PC-9 (cell line): ENCODE measurements at regions of chr13 and their contacts with region 1.

Region 1: DNA sequence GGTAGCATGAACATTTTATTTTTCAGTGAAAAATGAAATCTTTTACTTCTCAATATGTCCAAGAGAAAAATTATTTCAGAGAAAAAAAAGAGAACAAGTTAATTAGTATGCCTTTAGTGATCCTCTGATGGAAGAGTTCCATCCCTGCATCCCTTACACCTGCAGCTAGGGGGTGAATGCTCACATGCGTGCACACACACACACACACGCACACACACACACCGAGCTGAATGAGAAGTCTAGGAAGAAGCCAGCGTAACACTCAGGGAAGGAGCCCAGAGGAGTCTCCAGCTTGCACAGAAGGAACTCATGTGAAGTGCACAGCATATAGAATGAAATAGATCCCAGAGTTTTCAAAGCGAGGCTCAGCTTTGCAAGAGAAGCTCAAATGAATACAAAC is 510.5 kb downstream of the IRS2 start:
- DNase-seq: no peak
- H3K4me3 ChIP-seq: no peak overlapping the region
- H3K27ac ChIP-seq: no peak overlapping the region
- H3K4me1 ChIP-seq: peaks cover 47% of the 10 kb centered on the region
- H3K27me3 ChIP-seq: no peaks in the 10 kb centered on the region
- CTCF ChIP-seq: peak; percentile 46; the same call in 1 of the 2 replicates

Region 2: DNA sequence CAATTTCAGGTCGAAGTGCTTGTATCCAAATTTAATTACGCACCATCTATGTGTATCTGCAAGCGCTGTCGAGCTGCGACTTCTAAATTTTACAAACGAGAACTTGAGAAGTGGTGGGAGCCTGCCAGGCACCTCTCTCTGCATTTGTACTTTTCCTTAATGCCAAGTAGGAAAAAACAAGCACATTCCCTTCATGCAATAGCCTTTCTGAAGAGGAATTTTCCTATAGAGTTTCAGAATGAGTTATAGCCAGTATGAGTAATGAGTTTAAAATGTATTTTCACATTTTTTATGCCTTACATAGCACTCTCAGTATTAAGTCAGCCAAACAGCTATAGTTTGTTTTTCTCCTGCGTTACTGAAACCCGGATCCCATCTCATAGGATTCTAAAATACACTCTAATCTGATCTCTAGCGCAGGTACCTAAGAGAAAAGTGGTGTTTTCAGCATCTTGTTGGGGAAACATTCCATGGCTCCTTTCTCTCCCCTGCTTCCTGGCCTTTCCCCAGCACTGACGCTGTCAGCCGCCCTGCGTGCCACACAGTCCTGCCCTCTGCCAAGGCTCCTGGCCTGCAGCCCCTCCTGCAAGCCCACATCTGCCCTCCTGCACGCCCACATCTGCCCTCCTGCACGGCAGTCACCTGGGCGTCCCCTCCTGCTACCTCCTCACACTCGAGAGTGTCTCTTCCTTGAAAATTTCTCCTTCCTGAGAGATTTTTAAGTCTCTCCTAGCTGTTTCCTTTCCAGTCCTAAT is 119.5 kb before region 1 on chr13:
- CTCF ChIA-PET with region 1: no interaction called
- POLR2A ChIA-PET with region 1: interaction called, 10 read pairs
- intact Hi-C with region 1: no loop called
- DNase-seq: peak; percentile 48 to 98
- H3K4me3 ChIP-seq: peak overlapping the region; percentile 48
- H3K27ac ChIP-seq: peak overlapping the region; percentile 96
- H3K4me1 ChIP-seq: peaks cover 69% of the 10 kb centered on the region
- H3K27me3 ChIP-seq: no peaks in the 10 kb centered on the region
- CTCF ChIP-seq: no peak

Region 3: GRCh38 chr13:109529964-109530363 is 254.1 kb after region 1 on chr13:
- CTCF ChIA-PET with region 1: no interaction called
- POLR2A ChIA-PET with region 1: no interaction called
- intact Hi-C with region 1: loop called (anchors 10 kb)
- DNase-seq: no peak
- H3K4me3 ChIP-seq: no peak overlapping the region
- H3K27ac ChIP-seq: no peak overlapping the region
- H3K4me1 ChIP-seq: no peaks in the 10 kb centered on the region
- H3K27me3 ChIP-seq: no peaks in the 10 kb centered on the region
- CTCF ChIP-seq: no peak

Region 4: DNA sequence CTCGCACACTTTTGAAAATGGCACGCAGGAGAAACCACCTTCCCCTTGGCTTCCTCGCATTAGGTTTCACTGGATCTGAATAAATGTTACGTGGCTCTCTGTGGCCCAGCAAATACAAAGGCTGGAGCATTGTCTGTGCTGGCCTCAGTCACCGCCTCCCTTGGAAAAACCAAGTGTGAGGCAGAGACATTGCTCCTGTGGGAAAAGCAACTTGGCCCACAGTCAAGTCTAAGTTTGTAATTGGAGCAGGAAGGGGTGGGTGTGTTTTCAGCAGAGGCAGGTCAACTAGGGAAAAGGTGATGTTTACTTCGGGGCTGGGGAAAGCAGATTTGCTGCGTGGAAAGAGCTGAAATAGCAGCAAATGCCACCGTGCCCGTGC is 409.0 kb after region 1 on chr13:
- CTCF ChIA-PET with region 1: no interaction called
- POLR2A ChIA-PET with region 1: no interaction called
- intact Hi-C with region 1: loop called (anchors 5 kb)
- DNase-seq: peak; percentile 75 to 96
- H3K4me3 ChIP-seq: peak overlapping the region; percentile 52
- H3K27ac ChIP-seq: peak overlapping the region; percentile 95
- H3K4me1 ChIP-seq: peaks cover 50% of the 10 kb centered on the region
- H3K27me3 ChIP-seq: no peaks in the 10 kb centered on the region
- CTCF ChIP-seq: no peak

Region 5: DNA sequence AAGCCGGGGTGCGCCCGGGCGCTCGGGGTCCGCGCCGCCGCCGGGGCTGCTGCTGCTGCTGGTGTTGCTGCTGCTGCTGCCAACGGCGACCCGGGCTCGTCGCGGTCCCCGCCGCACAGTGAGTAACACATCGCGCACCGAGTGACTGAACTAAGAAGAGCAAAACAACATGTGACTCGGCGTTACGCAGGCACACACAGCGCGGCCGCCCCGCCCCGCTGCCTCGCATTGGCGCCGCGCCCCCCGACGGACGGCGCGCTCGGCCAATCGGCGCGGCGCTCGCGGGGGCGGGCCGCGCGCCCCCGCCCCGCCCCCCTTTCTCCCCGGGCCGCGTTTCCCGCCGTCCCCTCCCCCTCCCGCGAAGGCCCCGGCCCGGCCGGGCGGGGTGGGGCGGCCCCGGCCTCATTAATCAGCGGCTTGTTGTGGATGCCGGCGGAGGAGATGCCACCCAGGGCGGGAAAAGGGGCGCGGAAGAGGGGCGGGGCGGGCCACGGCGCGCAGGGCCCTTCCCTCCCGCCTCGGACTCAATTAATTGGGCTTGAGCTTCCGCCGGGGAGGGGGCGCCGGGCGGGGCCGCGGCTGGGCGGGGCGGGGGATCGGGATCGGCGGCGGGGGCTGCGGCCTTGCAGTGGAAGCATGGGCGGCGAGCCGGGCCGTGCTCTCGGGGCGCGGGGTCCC is 510.7 kb after region 1 on chr13 and contains the start of gene IRS2:
- CTCF ChIA-PET with region 1: no interaction called
- POLR2A ChIA-PET with region 1: interaction called, 6 read pairs
- intact Hi-C with region 1: loop called (anchors 1 kb)
- DNase-seq: peak; percentile 92 to 95
- H3K4me3 ChIP-seq: peak within 1 kb of the TSS; percentile 100
- H3K27ac ChIP-seq: peak within 1 kb of the TSS; percentile 83
- H3K4me1 ChIP-seq: peaks cover 40% of the 10 kb centered on the region
- H3K27me3 ChIP-seq: no peaks in the 10 kb centered on the region
- CTCF ChIP-seq: no peak
- total RNA-seq, gene IRS2: 31.3 and 39.2 TPM in 2 replicates

Region 6: GRCh38 chr13:110012102-110012739 is 736.4 kb after region 1 on chr13:
- CTCF ChIA-PET with region 1: no interaction called
- POLR2A ChIA-PET with region 1: no interaction called
- intact Hi-C with region 1: loop called (anchors 5 kb)
- DNase-seq: peak; percentile 77 to 99
- H3K4me3 ChIP-seq: 0 out of 2 replicates have a peak overlapping the region, but pooled peaks have one; percentile 4
- H3K27ac ChIP-seq: peak overlapping the region; percentile 91
- H3K4me1 ChIP-seq: peaks cover 49% of the 10 kb centered on the region
- H3K27me3 ChIP-seq: no peaks in the 10 kb centered on the region
- CTCF ChIP-seq: no peak

Region 7: DNA sequence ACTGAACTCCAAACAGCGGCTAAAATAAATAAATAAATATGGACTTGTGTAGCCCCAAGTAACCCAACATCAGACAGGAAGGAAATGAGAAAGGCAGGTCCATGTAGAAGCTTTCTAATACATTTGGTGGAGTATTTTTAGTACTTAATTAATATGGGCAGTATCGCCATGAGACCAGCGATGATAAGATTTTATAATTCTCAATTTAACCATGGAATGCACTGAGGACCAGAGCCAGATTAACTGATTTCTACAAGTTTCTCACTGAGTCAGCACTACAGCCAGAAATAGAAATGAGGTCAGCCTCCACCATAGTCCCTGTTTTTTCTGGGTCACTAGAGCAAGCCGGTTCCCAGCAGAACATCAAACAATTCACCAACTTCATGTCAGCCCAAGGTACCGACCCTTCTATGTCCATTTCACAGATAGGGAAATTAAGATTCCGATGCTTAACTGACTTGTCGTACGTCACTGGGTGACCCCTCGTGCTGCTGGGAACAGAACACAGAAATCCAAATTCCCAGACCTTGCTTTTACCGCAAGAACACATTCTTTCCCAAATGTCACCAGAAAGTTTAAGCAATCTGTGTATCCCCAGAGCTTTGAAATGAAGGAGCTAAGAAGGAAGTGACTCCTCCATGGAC is 940.7 kb after region 1 on chr13:
- CTCF ChIA-PET with region 1: no interaction called
- POLR2A ChIA-PET with region 1: no interaction called
- intact Hi-C with region 1: loop called (anchors 5 kb)
- DNase-seq: peak in 1 of 2 experiments; percentile 34
- H3K4me3 ChIP-seq: no peak overlapping the region
- H3K27ac ChIP-seq: no peak overlapping the region
- H3K4me1 ChIP-seq: no peaks in the 10 kb centered on the region
- H3K27me3 ChIP-seq: no peaks in the 10 kb centered on the region
- CTCF ChIP-seq: no peak